MCF 10A (cell line): ENCODE measurements at regions of chr4 and their contacts with region 1.

Region 1: GRCh38 chr4:94877973-94878372 is 120.2 kb downstream of the BMPR1B start:
- DNase-seq: peak; percentile 53
- H3K4me3 Mint-ChIP-seq: no peak overlapping the region
- H3K27ac Mint-ChIP-seq: peak overlapping the region; percentile 93
- H3K4me1 Mint-ChIP-seq: peaks cover 18% of the 10 kb centered on the region
- H3K27me3 Mint-ChIP-seq: no peaks in the 10 kb centered on the region
- CTCF ChIP-seq: no peak

Region 2: DNA sequence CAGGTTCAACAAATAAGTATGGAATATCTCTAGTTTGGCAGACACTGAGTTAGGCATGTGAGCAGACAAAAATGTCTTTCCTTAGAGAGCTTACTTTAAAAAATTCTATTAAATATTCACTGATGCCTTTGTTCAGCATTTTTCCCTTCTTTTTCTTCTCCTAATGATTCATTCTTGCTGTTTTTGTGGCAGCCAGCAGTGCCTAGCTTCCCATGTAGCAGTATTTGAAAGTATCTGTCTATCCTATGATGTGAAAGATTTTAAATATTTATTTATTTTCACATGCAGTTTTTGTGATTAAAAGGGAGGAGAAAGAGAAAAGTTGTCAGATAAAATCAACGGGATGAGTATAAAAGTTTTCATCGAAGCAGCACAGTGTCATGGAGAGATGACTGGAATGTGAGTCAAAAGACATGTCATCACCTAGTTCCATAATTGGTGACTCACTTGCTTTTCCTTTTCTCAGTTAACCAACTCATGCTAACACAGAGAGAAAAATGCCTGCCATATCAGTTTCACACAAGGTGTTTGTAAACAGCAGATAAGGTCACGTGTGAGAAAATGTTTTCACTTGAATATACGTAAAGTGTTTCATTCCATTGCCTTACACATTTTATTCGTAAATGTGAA is 50.4 kb before region 1 on chr4:
- CTCF ChIA-PET with region 1: no interaction called
- POLR2A ChIA-PET with region 1: interaction called, 4 read pairs
- intact Hi-C with region 1: loop called (anchors 2 kb)
- DNase-seq: peak; percentile 86
- H3K4me3 Mint-ChIP-seq: peak overlapping the region; percentile 8
- H3K27ac Mint-ChIP-seq: peak overlapping the region; percentile 74
- H3K4me1 Mint-ChIP-seq: peaks cover 14% of the 10 kb centered on the region
- H3K27me3 Mint-ChIP-seq: no peaks in the 10 kb centered on the region
- CTCF ChIP-seq: no peak